Dorsolateral prefrontal cortex (tissue), 120 donors: ENCODE measurements at regions of chr18 and their contacts with region 1.

Region 1: GRCh38 chr18:62131301-62131909 is 55.5 kb downstream of the PIGN start:
- DNase-seq: peak in 7 of 10 donors; percentile 21 to 65 (median 44)
- H3K4me3 ChIP-seq: no peak overlapping the region
- H3K27ac ChIP-seq: no peak overlapping the region
- H3K27me3 ChIP-seq: no peaks in the 10 kb centered on the region
- CTCF ChIP-seq: peak; percentile 37 to 98 (median 92)

Region 2: DNA sequence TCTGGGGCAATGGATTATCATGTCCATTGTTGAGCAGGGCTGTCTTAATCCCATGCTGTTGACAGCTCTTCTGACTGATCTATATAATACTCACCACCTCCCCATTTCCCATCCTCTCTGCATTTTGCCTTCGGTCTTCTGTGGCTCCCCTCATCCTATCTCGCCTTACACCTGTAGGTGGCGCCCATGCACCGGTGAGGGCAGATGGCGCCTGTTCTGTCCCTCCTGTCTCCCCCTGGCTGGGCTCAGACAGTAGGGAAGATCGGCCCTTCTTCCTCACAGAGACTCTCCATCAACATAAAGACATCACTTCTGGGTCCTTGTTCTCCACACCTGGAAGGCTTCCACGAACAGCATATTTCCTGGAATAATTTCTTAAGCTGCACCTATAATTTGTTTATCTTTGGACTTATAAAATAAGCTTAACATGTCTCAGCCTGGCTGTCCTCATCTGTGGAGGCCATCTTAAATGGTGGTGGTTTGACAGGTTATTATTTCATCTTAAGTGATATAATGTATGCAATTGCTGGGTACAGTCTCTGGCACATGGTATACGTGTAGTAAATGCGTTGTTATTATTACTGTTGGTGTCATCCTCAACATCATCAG is 809.0 kb before region 1 on chr18:
- intact Hi-C with region 1: loop called in 1 of 2 experiments (anchors 10 kb)
- DNase-seq: peak; percentile 46 to 84 (median 76)
- H3K4me3 ChIP-seq: no peak overlapping the region
- H3K27ac ChIP-seq: peak overlapping the region in 25 of 59 donors; percentile 3 to 71 (median 33)
- H3K27me3 ChIP-seq: no peaks in the 10 kb centered on the region
- CTCF ChIP-seq: peak; percentile 28 to 99 (median 90)

Region 3: DNA sequence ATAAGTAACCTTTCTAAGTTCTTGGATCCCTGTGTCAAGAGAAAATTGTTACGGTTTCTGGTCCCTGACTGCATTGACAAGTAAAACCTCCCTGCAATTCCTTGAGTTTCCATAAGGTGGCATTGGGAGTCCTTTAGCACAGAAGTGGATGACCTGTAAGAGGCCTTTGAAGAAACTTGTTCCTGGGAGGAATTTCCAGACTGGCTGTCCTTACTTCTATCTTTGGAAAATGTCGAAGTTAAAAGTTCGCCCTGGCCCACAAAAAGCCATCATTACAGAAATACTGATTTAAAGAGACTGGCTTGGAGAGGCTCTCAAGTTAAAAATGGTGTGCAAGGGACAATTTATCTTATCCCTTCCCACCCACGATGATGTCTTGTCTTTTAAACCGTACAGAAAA is 579.8 kb before region 1 on chr18:
- intact Hi-C with region 1: loop called in 1 of 2 experiments (anchors 10 kb)
- DNase-seq: peak in 1 of 10 donors; percentile 58
- H3K4me3 ChIP-seq: no peak overlapping the region
- H3K27ac ChIP-seq: no peak overlapping the region
- H3K27me3 ChIP-seq: no peaks in the 10 kb centered on the region
- CTCF ChIP-seq: peak; percentile 57 to 85 (median 75)

Region 4: GRCh38 chr18:61581578-61582201 is 549.7 kb before region 1 on chr18:
- intact Hi-C with region 1: loop called in 1 of 2 experiments (anchors 5 kb)
- DNase-seq: peak; percentile 40 to 88 (median 66)
- H3K4me3 ChIP-seq: peak overlapping the region; percentile 13 to 63 (median 40)
- H3K27ac ChIP-seq: peak overlapping the region in 19 of 59 donors; percentile 2 to 66 (median 34)
- H3K27me3 ChIP-seq: peaks cover 0 to 12% (median 0%) of the 10 kb centered on the region in 45 donors
- CTCF ChIP-seq: peak; percentile 91 to 99 (median 97)

Region 5: GRCh38 chr18:61635901-61636528 is 495.4 kb before region 1 on chr18:
- intact Hi-C with region 1: loop called in 1 of 2 experiments (anchors 10 kb)
- DNase-seq: peak in 7 of 10 donors; percentile 9 to 55 (median 24)
- H3K4me3 ChIP-seq: peak overlapping the region in 2 of 59 donors; percentile 25 to 35
- H3K27ac ChIP-seq: peak overlapping the region in 17 of 59 donors; percentile 2 to 71 (median 23)
- H3K27me3 ChIP-seq: peaks cover 0 to 10% (median 0%) of the 10 kb centered on the region in 45 donors
- CTCF ChIP-seq: peak; percentile 30 to 90 (median 74)

Region 6: DNA sequence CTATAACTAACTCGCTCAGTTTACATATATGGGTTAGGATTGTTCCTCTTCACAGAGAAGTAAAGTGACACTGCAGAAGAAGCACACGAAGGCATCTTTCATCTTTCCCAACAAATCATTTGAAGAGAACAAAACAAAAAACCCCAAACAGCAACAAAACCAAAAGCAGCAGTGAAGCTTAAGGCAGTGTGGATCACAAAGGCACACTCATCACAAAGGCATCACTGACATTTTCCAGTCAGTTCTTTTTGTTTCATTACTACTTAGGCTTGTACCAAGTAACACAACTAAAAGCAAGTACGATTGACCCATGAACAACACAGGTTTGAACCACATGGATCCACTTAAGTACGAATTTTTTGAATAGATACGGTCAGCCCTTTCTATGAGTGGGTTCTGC is 314.3 kb before region 1 on chr18:
- intact Hi-C with region 1: no loop called
- DNase-seq: no peak
- H3K4me3 ChIP-seq: no peak overlapping the region
- H3K27ac ChIP-seq: no peak overlapping the region
- H3K27me3 ChIP-seq: no peaks in the 10 kb centered on the region
- CTCF ChIP-seq: no peak

Region 7: GRCh38 chr18:61893971-61894750 is 237.2 kb before region 1 on chr18:
- intact Hi-C with region 1: loop called in 1 of 2 experiments (anchors 10 kb)
- DNase-seq: peak; percentile 62 to 86 (median 76)
- H3K4me3 ChIP-seq: peak overlapping the region; percentile 61 to 92 (median 79)
- H3K27ac ChIP-seq: peak overlapping the region in 53 of 59 donors; percentile 4 to 88 (median 71)
- H3K27me3 ChIP-seq: peaks cover 0 to 6% (median 0%) of the 10 kb centered on the region in 45 donors
- CTCF ChIP-seq: peak in 48 of 56 donors; percentile 7 to 72 (median 44)